ENCODE measurements at regions of chr20 and their contacts with region 1.

Region 1: DNA sequence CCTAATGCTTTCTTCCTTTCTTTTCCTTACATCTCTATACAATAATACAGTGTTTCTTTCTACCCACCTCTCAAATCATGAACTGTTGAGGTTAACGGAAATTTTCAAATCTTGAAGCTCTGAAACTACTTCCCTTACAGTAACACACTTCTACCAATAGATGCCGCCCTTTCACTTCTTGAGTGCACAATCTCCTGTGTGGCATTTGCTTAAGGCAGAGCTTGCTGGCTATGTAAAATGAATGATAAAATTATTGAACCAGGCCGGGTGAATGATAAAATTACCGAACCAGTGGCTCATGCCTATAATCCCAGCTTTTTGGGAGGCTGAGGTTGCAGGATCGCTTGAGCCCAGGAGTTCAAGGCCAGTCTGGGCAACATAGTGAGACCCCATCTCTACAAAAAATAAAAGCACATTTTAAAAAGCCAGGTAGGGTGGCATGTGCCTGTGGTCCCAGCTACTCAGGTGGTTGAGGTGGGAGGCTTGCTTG is 56.8 kb downstream of the KCNS1 start:
- DNase-seq: peak; percentile 43
- H3K4me3 Mint-ChIP-seq: no peak overlapping the region
- H3K27ac Mint-ChIP-seq: peak overlapping the region; percentile 55
- H3K4me1 Mint-ChIP-seq: peaks cover 54% of the 10 kb centered on the region
- H3K27me3 Mint-ChIP-seq: no peaks in the 10 kb centered on the region

Region 2: DNA sequence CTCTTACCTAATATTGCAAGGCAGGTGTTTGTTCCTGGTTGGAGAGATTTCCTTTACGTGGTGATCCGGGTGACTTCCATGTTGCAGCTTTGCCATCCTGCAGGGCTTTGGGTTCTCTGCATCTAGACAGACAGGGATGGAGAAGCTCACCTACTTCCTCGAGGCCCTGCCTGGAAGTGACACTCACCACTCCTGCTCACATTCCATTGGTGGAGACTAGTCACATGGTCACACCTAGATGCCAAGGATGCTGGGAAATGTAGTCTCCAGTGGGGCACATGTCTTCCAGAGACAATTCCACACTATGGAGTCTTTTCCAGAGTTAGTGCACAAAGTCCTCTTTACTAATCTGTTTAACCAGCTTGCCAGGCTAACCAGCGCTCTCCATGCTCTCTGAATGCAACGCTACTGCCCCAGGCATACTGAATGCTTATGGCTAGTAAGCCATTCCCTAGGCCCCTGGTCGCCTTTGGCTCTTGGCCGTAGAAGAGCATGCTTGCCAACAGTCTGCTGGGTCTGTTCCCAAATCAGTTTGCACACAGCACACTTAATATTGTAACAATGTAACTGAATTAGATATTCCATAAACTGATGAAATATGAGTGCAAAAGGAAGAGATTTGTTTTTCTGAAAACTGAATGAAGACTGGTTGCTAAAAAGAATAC is 305.2 kb before region 1 on chr20:
- CTCF ChIA-PET with region 1: no interaction called
- POLR2A ChIA-PET with region 1: no interaction called
- DNase-seq: peak; percentile 62
- H3K4me3 Mint-ChIP-seq: peak overlapping the region; percentile 60
- H3K27ac Mint-ChIP-seq: no peak overlapping the region
- H3K4me1 Mint-ChIP-seq: peaks cover 21% of the 10 kb centered on the region
- H3K27me3 Mint-ChIP-seq: peaks cover 10% of the 10 kb centered on the region

Region 3: GRCh38 chr20:44997171-44998067 is 46.7 kb before region 1 on chr20:
- CTCF ChIA-PET with region 1: interaction called, 10 read pairs
- POLR2A ChIA-PET with region 1: interaction called, 4 read pairs
- DNase-seq: no peak
- H3K4me3 Mint-ChIP-seq: no peak overlapping the region
- H3K27ac Mint-ChIP-seq: no peak overlapping the region
- H3K4me1 Mint-ChIP-seq: peaks cover 41% of the 10 kb centered on the region
- H3K27me3 Mint-ChIP-seq: no peaks in the 10 kb centered on the region

Region 4: GRCh38 chr20:45011108-45011526 is 33.0 kb before region 1 on chr20:
- CTCF ChIA-PET with region 1: interaction called, 15 read pairs
- POLR2A ChIA-PET with region 1: interaction called, 3 read pairs
- DNase-seq: peak; percentile 41
- H3K4me3 Mint-ChIP-seq: no peak overlapping the region
- H3K27ac Mint-ChIP-seq: no peak overlapping the region
- H3K4me1 Mint-ChIP-seq: peaks cover 46% of the 10 kb centered on the region
- H3K27me3 Mint-ChIP-seq: no peaks in the 10 kb centered on the region

Region 5: DNA sequence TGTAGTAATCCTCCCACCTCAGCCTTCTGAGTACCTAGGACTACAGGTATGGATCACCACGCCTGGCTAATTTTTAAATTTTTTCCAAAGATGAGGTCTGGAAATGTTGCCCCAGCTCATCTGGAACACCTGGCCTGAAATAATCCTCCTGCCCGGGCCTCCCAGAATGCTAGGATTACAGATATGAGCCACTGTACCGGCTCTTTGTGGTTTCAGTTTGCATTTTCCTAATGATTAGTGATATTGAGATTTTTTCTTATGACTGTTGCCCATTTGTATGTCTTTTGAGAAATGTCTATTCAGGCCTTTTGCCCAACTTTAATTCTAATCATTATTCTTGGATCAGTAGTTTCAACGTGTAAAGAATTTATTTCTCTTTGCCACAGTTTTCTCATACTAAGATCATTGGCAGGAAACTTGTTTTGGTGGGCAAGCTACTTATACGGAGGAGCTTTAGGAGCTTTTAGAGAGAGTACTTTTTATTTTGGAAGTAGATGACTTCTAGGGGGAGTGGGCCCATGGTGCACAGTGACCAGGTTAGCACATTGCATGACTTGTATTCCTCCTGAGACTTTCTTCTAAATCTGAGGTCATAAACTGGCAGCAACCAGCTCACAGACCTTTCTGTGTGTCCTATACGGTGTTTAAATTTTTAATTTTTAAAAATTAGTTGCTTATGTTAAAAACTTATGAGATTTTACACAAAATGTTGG is 15.5 kb before region 1 on chr20:
- CTCF ChIA-PET with region 1: interaction called, 13 read pairs
- POLR2A ChIA-PET with region 1: interaction called, 8 read pairs
- DNase-seq: no peak
- H3K4me3 Mint-ChIP-seq: no peak overlapping the region
- H3K27ac Mint-ChIP-seq: peak overlapping the region; percentile 55
- H3K4me1 Mint-ChIP-seq: peaks cover 44% of the 10 kb centered on the region
- H3K27me3 Mint-ChIP-seq: no peaks in the 10 kb centered on the region

Region 6: GRCh38 chr20:45187662-45188061 is 143.5 kb after region 1 on chr20:
- CTCF ChIA-PET with region 1: no interaction called
- POLR2A ChIA-PET with region 1: no interaction called
- DNase-seq: no peak
- H3K4me3 Mint-ChIP-seq: no peak overlapping the region
- H3K27ac Mint-ChIP-seq: no peak overlapping the region
- H3K4me1 Mint-ChIP-seq: no peaks in the 10 kb centered on the region
- H3K27me3 Mint-ChIP-seq: peaks cover 17% of the 10 kb centered on the region

Measured in activated CD4-positive, alpha-beta memory T cell treated with anti-CD3 and anti-CD28 coated beads, Interleukin-2, amount 10 ng/mL, durations not matched to agents 7 days and 5 days (primary cell).